ENCODE measurements at regions of chr5 and their contacts with region 1.

Region 1: DNA sequence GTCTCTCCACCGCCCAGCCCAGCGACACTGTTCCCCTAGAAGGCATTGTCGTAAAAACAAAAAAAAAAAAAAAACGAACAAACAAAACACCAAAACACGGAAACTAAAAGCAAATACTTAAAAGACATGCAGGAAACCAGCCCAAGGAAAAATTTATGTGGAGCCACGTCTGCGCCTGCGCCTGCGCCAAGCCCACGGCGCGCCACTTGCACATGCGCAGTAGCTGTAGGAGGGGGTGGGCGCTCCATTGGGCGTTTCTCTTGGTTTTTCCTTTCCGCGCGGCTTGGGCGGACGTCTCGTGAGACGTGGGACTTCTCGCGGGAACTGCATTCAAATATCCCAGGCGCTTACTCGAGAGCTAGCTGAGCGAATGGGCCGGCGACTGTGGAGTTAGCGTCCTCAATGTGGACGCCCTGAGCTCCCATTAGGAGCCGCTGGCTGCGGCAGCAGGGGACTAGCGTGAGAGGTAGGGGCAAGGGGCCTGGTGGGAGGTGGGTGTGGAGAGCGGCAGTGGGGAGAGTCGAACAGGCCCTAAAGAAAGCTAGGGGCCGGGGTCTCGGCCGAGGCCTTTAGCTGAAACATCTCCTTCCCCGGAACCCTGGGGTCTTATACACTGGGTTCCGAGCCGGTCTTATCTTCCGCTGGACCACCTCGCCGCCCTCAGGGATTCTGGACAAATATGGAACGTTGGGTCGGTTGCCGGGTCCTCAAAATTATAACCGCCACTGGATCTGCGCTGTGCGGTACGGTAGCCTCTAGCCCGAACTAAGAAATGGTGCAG is at the start of gene SPDL1:
- DNase-seq: peak; percentile 97
- ATAC-seq: peak; percentile 96
- H3K4me3 Mint-ChIP-seq: peak within 1 kb of the TSS; percentile 93
- H3K27ac Mint-ChIP-seq: peak within 1 kb of the TSS; percentile 87
- H3K4me1 Mint-ChIP-seq: peaks cover 38% of the 10 kb centered on the region
- H3K27me3 Mint-ChIP-seq: no peaks in the 10 kb centered on the region
- total RNA-seq, gene SPDL1: 40.3 to 56.6 TPM

Region 2: GRCh38 chr5:168268949-168269943 is 1314.4 kb before region 1 on chr5:
- CTCF ChIA-PET with region 1: no interaction called
- POLR2A ChIA-PET with region 1: no interaction called
- intact Hi-C with region 1: loop called in 1 of 2 experiments (anchors 2 kb)
- DNase-seq: peak; percentile 87
- ATAC-seq: peak; percentile 79
- H3K4me3 Mint-ChIP-seq: peak overlapping the region; percentile 28
- H3K27ac Mint-ChIP-seq: no peak overlapping the region
- H3K4me1 Mint-ChIP-seq: peaks cover 18% of the 10 kb centered on the region
- H3K27me3 Mint-ChIP-seq: peaks cover 8% of the 10 kb centered on the region

Region 3: GRCh38 chr5:168679515-168679920 is 904.1 kb before region 1 on chr5:
- CTCF ChIA-PET with region 1: interaction called, 5 read pairs
- POLR2A ChIA-PET with region 1: no interaction called
- intact Hi-C with region 1: loop called (anchors 1 to 2 kb)
- DNase-seq: peak; percentile 84
- ATAC-seq: peak; percentile 28
- H3K4me3 Mint-ChIP-seq: no peak overlapping the region
- H3K27ac Mint-ChIP-seq: no peak overlapping the region
- H3K4me1 Mint-ChIP-seq: peaks cover 28% of the 10 kb centered on the region
- H3K27me3 Mint-ChIP-seq: no peaks in the 10 kb centered on the region

Region 4: GRCh38 chr5:168987543-168988300 is 595.9 kb before region 1 on chr5:
- CTCF ChIA-PET with region 1: interaction called, 13 read pairs
- POLR2A ChIA-PET with region 1: no interaction called
- intact Hi-C with region 1: loop called (anchors 1 kb)
- DNase-seq: peak; percentile 79
- ATAC-seq: peak; percentile 63
- H3K4me3 Mint-ChIP-seq: no peak overlapping the region
- H3K27ac Mint-ChIP-seq: no peak overlapping the region
- H3K4me1 Mint-ChIP-seq: peaks cover 4% of the 10 kb centered on the region
- H3K27me3 Mint-ChIP-seq: peaks cover 9% of the 10 kb centered on the region

Region 5: DNA sequence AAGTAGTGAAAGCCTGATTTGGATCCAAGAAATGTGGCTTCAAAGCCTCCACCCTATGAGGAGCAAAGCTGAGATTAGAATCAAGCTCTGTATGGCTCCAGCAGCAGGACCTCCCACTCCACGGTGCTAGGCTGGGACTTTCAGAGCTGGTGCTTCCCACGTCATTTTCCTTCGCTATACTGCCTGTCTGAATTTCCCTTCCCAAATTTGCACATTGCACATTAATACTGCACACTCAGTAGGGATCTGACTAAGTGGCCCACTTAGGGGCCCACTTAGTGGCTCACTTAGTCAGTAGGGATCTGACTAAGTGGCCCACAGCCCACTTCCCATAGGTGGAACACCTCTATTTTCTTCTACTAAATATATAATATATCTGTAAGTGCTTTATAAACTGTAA is 14.1 kb before region 1 on chr5:
- CTCF ChIA-PET with region 1: interaction called, 11 read pairs
- POLR2A ChIA-PET with region 1: no interaction called
- intact Hi-C with region 1: no loop called
- DNase-seq: no peak
- ATAC-seq: peak; percentile 30
- H3K4me3 Mint-ChIP-seq: no peak overlapping the region
- H3K27ac Mint-ChIP-seq: no peak overlapping the region
- H3K4me1 Mint-ChIP-seq: no peaks in the 10 kb centered on the region
- H3K27me3 Mint-ChIP-seq: peaks cover 41% of the 10 kb centered on the region

Region 6: DNA sequence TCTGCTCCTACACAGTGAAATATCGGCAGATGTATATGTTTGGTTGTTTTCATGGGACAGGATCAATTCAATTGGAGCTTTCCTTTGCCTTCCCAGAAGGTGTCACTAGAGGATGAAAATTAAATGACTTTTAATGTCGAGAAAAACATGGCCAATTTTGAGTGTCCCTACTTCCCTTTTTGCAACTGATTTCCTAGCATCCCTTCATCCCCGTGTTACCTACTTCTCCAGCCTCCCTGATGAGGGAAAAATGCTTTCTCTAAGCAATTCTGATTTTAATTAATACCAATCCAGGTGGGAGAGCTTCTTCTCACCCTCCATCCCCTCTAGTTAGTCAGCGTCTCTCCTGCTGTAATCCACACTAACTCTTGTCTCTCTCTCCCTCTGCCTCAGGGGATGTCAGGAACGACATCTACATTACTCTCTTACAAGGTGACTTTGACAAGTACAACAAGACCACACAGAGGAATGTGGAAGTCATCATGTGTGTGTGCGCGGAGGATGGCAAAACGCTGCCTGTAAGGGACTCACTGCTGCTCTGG is 118.4 kb after region 1 on chr5:
- CTCF ChIA-PET with region 1: no interaction called
- POLR2A ChIA-PET with region 1: no interaction called
- intact Hi-C with region 1: loop called (anchors 1 to 5 kb)
- DNase-seq: no peak
- ATAC-seq: no peak
- H3K4me3 Mint-ChIP-seq: no peak overlapping the region
- H3K27ac Mint-ChIP-seq: peak overlapping the region; percentile 76
- H3K4me1 Mint-ChIP-seq: peaks cover 44% of the 10 kb centered on the region
- H3K27me3 Mint-ChIP-seq: no peaks in the 10 kb centered on the region

Region 7: GRCh38 chr5:171387345-171387969 is 1803.8 kb after region 1 on chr5 and contains the start of gene NPM1:
- CTCF ChIA-PET with region 1: no interaction called
- POLR2A ChIA-PET with region 1: no interaction called
- intact Hi-C with region 1: loop called in 1 of 2 experiments (anchors 5 kb)
- DNase-seq: peak; percentile 99
- ATAC-seq: peak; percentile 83
- H3K4me3 Mint-ChIP-seq: peak within 1 kb of the TSS; percentile 88
- H3K27ac Mint-ChIP-seq: peak within 1 kb of the TSS; percentile 99
- H3K4me1 Mint-ChIP-seq: peaks cover 37% of the 10 kb centered on the region
- H3K27me3 Mint-ChIP-seq: no peaks in the 10 kb centered on the region
- total RNA-seq, gene NPM1: 3,156 to 3,905 TPM